IMR-90 (cell line): ENCODE measurements at regions of chr12 and their contacts with region 1.

Region 1: DNA sequence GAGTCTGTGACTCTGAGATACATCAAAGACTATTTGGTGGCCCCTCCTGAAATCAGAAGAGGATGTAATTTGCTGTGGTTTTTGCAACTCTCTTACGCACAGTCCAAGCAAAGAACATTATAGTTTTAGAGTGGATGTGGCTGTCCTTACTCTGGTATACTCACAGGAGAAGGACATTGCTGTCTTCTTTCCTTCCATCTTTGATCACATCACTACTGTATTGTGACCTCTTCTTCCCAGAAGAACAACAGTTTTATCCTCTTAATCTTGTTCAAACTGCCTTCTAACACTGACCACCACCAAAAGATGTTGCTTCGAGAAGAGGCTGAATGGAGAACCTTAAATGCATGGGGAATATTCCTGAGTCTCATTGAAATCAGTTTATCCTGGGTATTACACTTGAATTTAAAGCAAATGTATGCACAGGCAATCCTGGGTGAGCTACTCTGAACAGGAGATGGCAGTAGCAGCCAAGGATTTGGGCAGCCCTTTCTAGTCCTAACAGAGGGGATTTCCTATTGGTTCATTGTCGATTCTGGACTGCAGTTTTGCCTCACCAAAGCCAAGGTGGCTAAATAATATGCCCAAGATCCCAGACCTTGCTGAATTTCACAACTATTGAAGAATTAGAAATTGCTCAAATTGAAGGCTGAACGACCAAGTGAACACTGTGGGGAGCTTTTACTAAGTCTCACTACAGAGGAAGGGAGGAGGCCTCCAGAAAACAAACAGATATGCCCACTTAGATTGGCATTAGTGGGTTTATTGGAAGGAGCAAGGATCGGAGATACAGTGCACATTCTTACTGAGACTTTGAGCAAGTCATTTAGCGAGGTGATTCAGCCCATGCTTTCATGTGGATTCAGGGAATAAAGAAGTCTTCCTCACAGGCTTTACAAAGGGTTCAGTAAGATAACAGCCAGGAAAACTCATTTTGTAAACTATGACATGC is 282.8 kb downstream of the PAWR start:
- DNase-seq: peak; percentile 91
- ATAC-seq: peak; percentile 91
- H3K4me3 ChIP-seq: no peak overlapping the region
- H3K27ac ChIP-seq: peak overlapping the region; percentile 45; the same call in 1 of the 2 replicates
- H3K4me1 ChIP-seq: peaks cover 14% of the 10 kb centered on the region
- H3K27me3 ChIP-seq: no peaks in the 10 kb centered on the region
- CTCF ChIP-seq: peak; percentile 97
- POLR2A ChIP-seq: peak; percentile 58; the same call in 1 of the 2 replicates
- RAD21 ChIP-seq: peak; percentile 96

Region 2: GRCh38 chr12:79420146-79420618 is 12.2 kb after region 1 on chr12:
- CTCF ChIA-PET with region 1: interaction called, 3 read pairs
- POLR2A ChIA-PET with region 1: no interaction called
- dilution Hi-C with region 1: no loop called
- in situ Hi-C with region 1: no loop called
- intact Hi-C with region 1: loop called (anchors 1 kb)
- DNase-seq: peak; percentile 95
- ATAC-seq: peak; percentile 66
- H3K4me3 ChIP-seq: no peak overlapping the region
- H3K27ac ChIP-seq: peak overlapping the region; percentile 72
- H3K4me1 ChIP-seq: peaks cover 24% of the 10 kb centered on the region
- H3K27me3 ChIP-seq: no peaks in the 10 kb centered on the region
- CTCF ChIP-seq: peak; percentile 79
- POLR2A ChIP-seq: no peak
- RAD21 ChIP-seq: peak; percentile 80

Region 3: GRCh38 chr12:79690638-79691493 is 282.9 kb after region 1 on chr12 and contains the start of gene PAWR:
- CTCF ChIA-PET with region 1: no interaction called
- POLR2A ChIA-PET with region 1: no interaction called
- dilution Hi-C with region 1: no loop called
- in situ Hi-C with region 1: no loop called
- intact Hi-C with region 1: loop called (anchors 2 kb)
- DNase-seq: peak; percentile 93
- ATAC-seq: peak; percentile 60
- H3K4me3 ChIP-seq: peak within 1 kb of the TSS; percentile 96
- H3K27ac ChIP-seq: peak within 1 kb of the TSS; percentile 79
- H3K4me1 ChIP-seq: peaks cover 12% of the 10 kb centered on the region; the same call in 1 of the 2 replicates
- H3K27me3 ChIP-seq: no peaks in the 10 kb centered on the region
- CTCF ChIP-seq: peak; percentile 30
- POLR2A ChIP-seq: peak; percentile 80
- RAD21 ChIP-seq: no peak
- total RNA-seq, gene PAWR: 13.6 and 34.4 TPM in 2 replicates

Region 4: GRCh38 chr12:79776111-79776510 is 368.2 kb after region 1 on chr12:
- CTCF ChIA-PET with region 1: no interaction called
- POLR2A ChIA-PET with region 1: interaction called, 3 read pairs
- dilution Hi-C with region 1: no loop called
- in situ Hi-C with region 1: no loop called
- intact Hi-C with region 1: loop called (anchors 5 kb)
- DNase-seq: peak; percentile 68
- ATAC-seq: peak; percentile 63
- H3K4me3 ChIP-seq: no peak overlapping the region
- H3K27ac ChIP-seq: no peak overlapping the region
- H3K4me1 ChIP-seq: no peaks in the 10 kb centered on the region
- H3K27me3 ChIP-seq: no peaks in the 10 kb centered on the region
- CTCF ChIP-seq: no peak
- POLR2A ChIP-seq: no peak
- RAD21 ChIP-seq: no peak

Region 5: DNA sequence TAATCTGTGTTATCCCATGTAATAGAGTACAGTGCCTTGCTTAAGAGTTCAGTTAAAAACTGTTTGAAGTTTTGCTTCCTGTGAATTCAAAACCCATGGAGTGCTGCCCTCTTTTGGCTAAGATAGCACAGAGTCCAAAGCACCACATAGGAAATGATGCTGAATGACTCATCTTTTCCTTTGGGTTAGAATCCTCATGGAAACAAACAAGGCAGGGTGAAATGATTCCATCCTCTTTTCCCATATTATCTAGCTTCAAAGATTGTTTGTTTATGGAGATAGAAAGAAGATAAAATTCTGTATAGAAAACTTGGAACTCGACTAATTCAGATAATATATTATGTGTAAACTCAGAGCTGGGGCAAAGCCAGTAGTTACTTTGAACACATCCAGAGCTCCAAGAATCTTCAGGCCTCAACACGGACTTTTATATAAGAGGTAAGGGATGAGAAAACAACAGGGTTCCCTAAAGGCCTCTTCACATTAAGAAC is 778.8 kb after region 1 on chr12:
- CTCF ChIA-PET with region 1: no interaction called
- POLR2A ChIA-PET with region 1: no interaction called
- dilution Hi-C with region 1: no loop called
- in situ Hi-C with region 1: loop called (anchors 5 kb)
- intact Hi-C with region 1: loop called (anchors 1 kb)
- DNase-seq: peak; percentile 97
- ATAC-seq: peak; percentile 86
- H3K4me3 ChIP-seq: no peak overlapping the region
- H3K27ac ChIP-seq: peak overlapping the region; percentile 77
- H3K4me1 ChIP-seq: peaks cover 17% of the 10 kb centered on the region
- H3K27me3 ChIP-seq: no peaks in the 10 kb centered on the region
- CTCF ChIP-seq: peak; percentile 93
- POLR2A ChIP-seq: peak; percentile 55; the same call in 1 of the 2 replicates
- RAD21 ChIP-seq: peak; percentile 92

Region 6: DNA sequence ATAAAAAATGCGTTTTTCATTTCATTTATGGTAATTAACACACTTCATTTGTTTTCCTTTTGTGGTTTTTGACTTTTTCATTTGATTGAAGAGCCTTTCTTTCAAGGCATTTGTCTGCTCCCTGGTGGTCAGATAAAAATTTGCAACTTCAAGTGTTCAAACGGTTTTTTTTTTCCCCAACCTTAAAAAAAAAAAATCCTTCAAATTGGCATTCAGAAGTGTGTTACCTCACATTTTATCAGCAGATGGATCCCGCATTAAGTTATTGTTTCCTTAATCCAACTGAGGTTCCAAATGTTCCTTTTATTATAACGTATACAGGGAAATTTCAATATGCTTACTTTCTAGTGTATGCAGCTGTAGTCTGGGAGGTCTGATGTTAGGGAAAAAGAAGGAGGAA is 1355.9 kb after region 1 on chr12:
- CTCF ChIA-PET with region 1: no interaction called
- POLR2A ChIA-PET with region 1: no interaction called
- dilution Hi-C with region 1: no loop called
- in situ Hi-C with region 1: no loop called
- intact Hi-C with region 1: loop called (anchors 2 kb)
- DNase-seq: peak; percentile 66
- ATAC-seq: peak; percentile 53; the same call in 1 of the 2 replicates
- H3K4me3 ChIP-seq: no peak overlapping the region
- H3K27ac ChIP-seq: no peak overlapping the region
- H3K4me1 ChIP-seq: peaks cover 2% of the 10 kb centered on the region; the same call in 1 of the 2 replicates
- H3K27me3 ChIP-seq: no peaks in the 10 kb centered on the region
- CTCF ChIP-seq: peak; percentile 75
- POLR2A ChIP-seq: no peak
- RAD21 ChIP-seq: peak; percentile 70

Region 7: DNA sequence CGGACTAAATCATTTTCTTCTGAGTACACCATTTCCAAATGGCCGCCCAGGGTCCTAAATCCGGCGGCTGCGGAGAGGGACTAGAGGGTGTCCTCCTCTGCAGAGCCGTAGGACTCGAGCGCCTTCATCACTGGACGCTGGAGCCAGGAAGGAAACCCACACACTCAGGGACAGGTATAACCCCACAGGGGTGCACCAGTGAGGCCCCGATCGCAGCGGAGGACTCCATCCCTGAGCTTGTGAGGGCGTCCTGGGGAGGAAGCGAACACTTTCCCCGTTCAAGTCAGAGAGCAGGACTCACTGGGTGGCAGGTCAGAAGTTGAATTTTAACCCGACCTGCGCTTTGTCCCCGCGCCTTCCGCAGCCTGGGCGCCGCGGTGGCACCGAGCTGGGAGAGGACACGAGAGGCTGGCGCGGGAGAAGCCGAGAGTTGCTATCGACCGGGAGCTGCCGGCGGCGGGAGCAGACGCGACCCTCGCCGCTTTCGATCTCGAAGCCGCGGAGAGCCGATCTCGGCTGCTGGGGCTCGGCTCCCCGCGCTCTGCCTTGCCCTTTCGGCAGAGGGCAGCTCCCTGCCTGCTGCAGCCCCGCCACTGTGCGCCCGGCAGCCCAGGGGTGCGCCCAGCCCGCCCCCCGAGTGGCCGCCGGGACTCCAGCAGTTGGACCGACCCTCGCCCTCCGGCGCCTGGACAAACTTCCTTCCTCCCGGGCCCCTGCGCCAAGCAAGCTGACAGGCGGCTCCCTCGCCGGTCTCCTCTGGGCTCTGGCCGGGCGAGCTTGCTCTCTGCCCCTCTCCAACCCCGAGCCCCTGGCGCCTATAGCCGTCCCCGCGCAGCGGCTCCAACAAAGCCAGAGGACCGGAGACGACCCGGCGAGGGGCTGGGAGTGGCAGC is 1528.8 kb after region 1 on chr12:
- CTCF ChIA-PET with region 1: no interaction called
- POLR2A ChIA-PET with region 1: no interaction called
- dilution Hi-C with region 1: no loop called
- in situ Hi-C with region 1: loop called (anchors 25 kb)
- intact Hi-C with region 1: no loop called
- DNase-seq: peak; percentile 42
- ATAC-seq: peak; percentile 81
- H3K4me3 ChIP-seq: peak overlapping the region; percentile 98
- H3K27ac ChIP-seq: peak overlapping the region; percentile 74
- H3K4me1 ChIP-seq: no peaks in the 10 kb centered on the region
- H3K27me3 ChIP-seq: no peaks in the 10 kb centered on the region
- CTCF ChIP-seq: no peak
- POLR2A ChIP-seq: no peak
- RAD21 ChIP-seq: no peak